ENCODE measurements at regions of chr1 and their contacts with region 1.

Region 1: GRCh38 chr1:8817406-8818324 is at the start of gene RERE:
- DNase-seq: peak; percentile 97
- H3K4me3 ChIP-seq: peak within 1 kb of the TSS; percentile 96
- H3K27ac ChIP-seq: peak within 1 kb of the TSS; percentile 96
- H3K4me1 ChIP-seq: peaks cover 54% of the 10 kb centered on the region
- H3K27me3 ChIP-seq: no peaks in the 10 kb centered on the region
- CTCF ChIP-seq: no peak
- total RNA-seq, gene RERE: 188 and 220 TPM in 2 replicates

Region 2: DNA sequence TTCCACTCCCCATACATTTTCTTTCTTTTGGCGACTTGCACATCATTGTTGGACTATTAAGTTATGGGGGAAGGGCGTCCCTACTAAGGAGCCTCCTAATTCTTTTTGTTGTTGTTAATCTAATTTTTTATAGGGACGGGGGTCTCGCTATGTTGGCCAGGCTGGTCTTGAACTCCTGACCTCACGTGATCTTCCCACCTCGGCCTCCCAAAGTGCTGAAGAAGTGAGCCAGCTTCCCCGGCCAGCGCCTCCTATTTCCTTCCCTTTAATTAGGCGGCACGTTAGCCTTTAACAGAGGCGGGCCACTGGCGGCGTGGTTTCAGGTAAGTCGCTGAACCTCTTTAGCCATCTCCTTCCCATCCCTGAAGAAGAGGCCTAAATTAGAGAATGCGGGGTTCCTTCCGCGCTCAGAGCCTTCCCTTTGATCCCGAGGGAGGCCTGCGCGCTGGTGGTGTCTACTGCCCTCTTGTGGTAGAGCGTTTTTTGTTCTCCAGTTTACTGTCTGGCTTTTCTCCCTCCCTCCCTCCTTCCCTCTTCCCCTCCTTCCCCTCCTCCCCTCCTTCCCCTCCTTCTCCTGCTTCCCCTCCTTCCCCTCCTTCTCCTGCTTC is 915.1 kb before region 1 on chr1:
- CTCF ChIA-PET with region 1: interaction called, 10 read pairs
- POLR2A ChIA-PET with region 1: no interaction called
- intact Hi-C with region 1: no loop called
- DNase-seq: peak; percentile 91
- H3K4me3 ChIP-seq: no peak overlapping the region
- H3K27ac ChIP-seq: no peak overlapping the region
- H3K4me1 ChIP-seq: peaks cover 4% of the 10 kb centered on the region
- H3K27me3 ChIP-seq: no peaks in the 10 kb centered on the region
- CTCF ChIP-seq: peak; percentile 67

Region 3: GRCh38 chr1:8789314-8790214 is 28.1 kb before region 1 on chr1:
- CTCF ChIA-PET with region 1: no interaction called
- POLR2A ChIA-PET with region 1: interaction called, 14 read pairs
- intact Hi-C with region 1: no loop called
- DNase-seq: no peak
- H3K4me3 ChIP-seq: no peak overlapping the region
- H3K27ac ChIP-seq: no peak overlapping the region
- H3K4me1 ChIP-seq: peaks cover 9% of the 10 kb centered on the region
- H3K27me3 ChIP-seq: no peaks in the 10 kb centered on the region
- CTCF ChIP-seq: no peak

Region 4: DNA sequence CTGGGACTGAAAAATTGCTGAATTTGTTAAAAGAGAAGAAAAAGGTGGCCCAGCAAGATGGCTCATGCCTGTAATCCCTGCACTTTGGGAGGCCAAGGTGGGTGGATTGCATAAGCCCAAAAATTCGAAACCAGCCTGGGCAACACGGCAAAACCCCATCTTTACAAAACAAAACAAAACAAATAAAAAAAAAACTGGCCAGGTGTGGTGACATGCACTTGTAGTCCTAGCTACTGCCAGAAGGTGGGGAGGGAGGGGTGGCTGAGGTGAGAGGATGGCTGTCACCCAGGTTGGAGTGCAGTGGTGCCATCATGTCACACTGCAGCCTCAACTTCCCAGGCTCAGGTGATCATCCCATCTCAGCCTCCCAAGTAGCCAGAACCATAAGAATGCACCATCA is 23.1 kb before region 1 on chr1:
- CTCF ChIA-PET with region 1: no interaction called
- POLR2A ChIA-PET with region 1: interaction called, 14 read pairs
- intact Hi-C with region 1: no loop called
- DNase-seq: no peak
- H3K4me3 ChIP-seq: no peak overlapping the region
- H3K27ac ChIP-seq: no peak overlapping the region
- H3K4me1 ChIP-seq: peaks cover 6% of the 10 kb centered on the region
- H3K27me3 ChIP-seq: no peaks in the 10 kb centered on the region
- CTCF ChIP-seq: no peak

Region 5: GRCh38 chr1:8878448-8879347 is 61.0 kb after region 1 on chr1 and contains the start of gene ENO1:
- CTCF ChIA-PET with region 1: no interaction called
- POLR2A ChIA-PET with region 1: interaction called, 12 read pairs
- intact Hi-C with region 1: no loop called
- DNase-seq: peak; percentile 97
- H3K4me3 ChIP-seq: peak within 1 kb of the TSS; percentile 100
- H3K27ac ChIP-seq: peak within 1 kb of the TSS; percentile 99
- H3K4me1 ChIP-seq: peaks cover 37% of the 10 kb centered on the region
- H3K27me3 ChIP-seq: no peaks in the 10 kb centered on the region
- CTCF ChIP-seq: no peak
- total RNA-seq, gene ENO1: 2,313 and 2,659 TPM in 2 replicates

Measured in A673 (cell line).